Activated CD4-positive, alpha-beta T cell treated with anti-CD3 and anti-CD28 coated beads for 36 hours (primary cell): ENCODE measurements at regions of chr16 and their contacts with region 1.

Region 1: GRCh38 chr16:75519881-75520280 is 16.0 kb downstream of the CHST5 start:
- DNase-seq: no peak
- ATAC-seq: no peak
- H3K4me3 Mint-ChIP-seq: no peak overlapping the region
- H3K27ac Mint-ChIP-seq: no peak overlapping the region
- H3K4me1 Mint-ChIP-seq: peaks cover 7% of the 10 kb centered on the region
- H3K27me3 Mint-ChIP-seq: no peaks in the 10 kb centered on the region

Region 2: GRCh38 chr16:75198135-75198600 is 321.7 kb before region 1 on chr16:
- CTCF ChIA-PET with region 1: interaction called, 5 read pairs
- POLR2A ChIA-PET with region 1: no interaction called
- intact Hi-C with region 1: loop called in 1 of 2 experiments (anchors 2 kb)
- DNase-seq: no peak
- ATAC-seq: no peak
- H3K4me3 Mint-ChIP-seq: no peak overlapping the region
- H3K27ac Mint-ChIP-seq: no peak overlapping the region
- H3K4me1 Mint-ChIP-seq: peaks cover 8% of the 10 kb centered on the region
- H3K27me3 Mint-ChIP-seq: peaks cover 10% of the 10 kb centered on the region

Region 3: GRCh38 chr16:75464130-75464918 is 55.6 kb before region 1 on chr16 and contains the start of gene TMEM170A:
- CTCF ChIA-PET with region 1: interaction called, 9 read pairs
- POLR2A ChIA-PET with region 1: no interaction called
- intact Hi-C with region 1: loop called (anchors 1 kb)
- DNase-seq: peak; percentile 100
- ATAC-seq: peak; percentile 94
- H3K4me3 Mint-ChIP-seq: peak within 1 kb of the TSS; percentile 98
- H3K27ac Mint-ChIP-seq: peak within 1 kb of the TSS; percentile 94
- H3K4me1 Mint-ChIP-seq: peaks cover 45% of the 10 kb centered on the region
- H3K27me3 Mint-ChIP-seq: no peaks in the 10 kb centered on the region
- total RNA-seq, gene TMEM170A: 22.0 to 30.5 TPM

Region 4: DNA sequence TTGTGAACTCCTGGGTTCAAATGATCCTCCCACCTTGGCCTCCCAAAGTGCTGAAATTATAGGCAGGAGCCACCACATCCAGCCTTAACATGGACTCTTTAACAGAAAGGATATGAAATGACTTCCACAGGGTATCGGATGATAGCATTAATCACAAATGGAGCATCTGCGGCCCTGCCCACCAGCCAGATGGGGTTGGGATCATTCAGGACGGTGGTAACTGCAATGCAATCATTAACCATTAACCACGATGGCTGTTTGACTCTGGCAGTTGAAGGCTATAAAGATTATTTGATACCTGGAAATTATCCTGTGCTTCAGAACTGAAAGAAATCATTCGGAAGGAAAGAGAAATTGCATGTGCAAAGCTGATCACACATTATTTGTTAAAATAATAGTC is 21.4 kb after region 1 on chr16:
- CTCF ChIA-PET with region 1: no interaction called
- POLR2A ChIA-PET with region 1: no interaction called
- intact Hi-C with region 1: no loop called
- DNase-seq: no peak
- ATAC-seq: no peak
- H3K4me3 Mint-ChIP-seq: no peak overlapping the region
- H3K27ac Mint-ChIP-seq: no peak overlapping the region
- H3K4me1 Mint-ChIP-seq: no peaks in the 10 kb centered on the region
- H3K27me3 Mint-ChIP-seq: no peaks in the 10 kb centered on the region

Region 5: GRCh38 chr16:75555707-75556430 is 36.0 kb after region 1 on chr16 and contains the start of gene TMEM231:
- CTCF ChIA-PET with region 1: interaction called, 15 read pairs
- POLR2A ChIA-PET with region 1: interaction called, 3 read pairs
- intact Hi-C with region 1: loop called in 1 of 2 experiments (anchors 1 kb)
- DNase-seq: peak; percentile 99
- ATAC-seq: peak; percentile 98
- H3K4me3 Mint-ChIP-seq: peak within 1 kb of the TSS; percentile 79
- H3K27ac Mint-ChIP-seq: peak within 1 kb of the TSS; percentile 71
- H3K4me1 Mint-ChIP-seq: peaks cover 7% of the 10 kb centered on the region
- H3K27me3 Mint-ChIP-seq: peaks cover 3% of the 10 kb centered on the region
- total RNA-seq, gene TMEM231: 3.6 to 4.1 TPM

Region 6: DNA sequence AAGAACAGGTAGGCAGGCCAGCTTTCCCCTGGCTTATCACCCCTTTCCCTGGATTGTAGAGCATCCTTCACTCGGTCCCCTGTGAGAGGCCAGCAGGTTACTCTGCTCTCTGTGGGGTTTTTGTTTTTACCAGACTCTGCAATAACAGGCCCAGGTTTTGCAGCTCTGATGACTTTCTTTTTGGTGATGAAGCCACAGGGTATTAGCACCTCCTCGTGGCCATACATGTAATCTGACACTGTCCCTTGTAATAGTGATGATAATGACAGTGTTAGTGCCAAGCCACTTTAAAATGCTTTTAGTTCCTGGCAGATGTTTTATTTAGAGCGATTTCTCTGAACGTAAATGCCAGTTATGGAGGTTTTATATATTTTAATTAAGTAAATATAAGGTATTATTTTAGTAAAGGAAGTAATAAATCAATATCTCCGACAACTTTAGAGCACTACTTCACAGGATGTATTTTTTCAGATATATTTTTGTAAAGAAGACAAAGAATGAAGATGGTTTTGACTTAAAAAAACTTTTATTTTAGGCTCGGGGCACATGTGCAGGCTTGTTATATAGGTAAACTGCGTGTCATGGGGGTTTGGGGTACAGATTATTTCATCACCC is 244.4 kb after region 1 on chr16:
- CTCF ChIA-PET with region 1: interaction called, 7 read pairs
- POLR2A ChIA-PET with region 1: no interaction called
- intact Hi-C with region 1: loop called (anchors 1 to 2 kb)
- DNase-seq: peak; percentile 70
- ATAC-seq: peak; percentile 93
- H3K4me3 Mint-ChIP-seq: no peak overlapping the region
- H3K27ac Mint-ChIP-seq: no peak overlapping the region
- H3K4me1 Mint-ChIP-seq: peaks cover 11% of the 10 kb centered on the region
- H3K27me3 Mint-ChIP-seq: peaks cover 2% of the 10 kb centered on the region